MCF 10A (cell line): ENCODE measurements at regions of chrX and their contacts with region 1.

Region 1: DNA sequence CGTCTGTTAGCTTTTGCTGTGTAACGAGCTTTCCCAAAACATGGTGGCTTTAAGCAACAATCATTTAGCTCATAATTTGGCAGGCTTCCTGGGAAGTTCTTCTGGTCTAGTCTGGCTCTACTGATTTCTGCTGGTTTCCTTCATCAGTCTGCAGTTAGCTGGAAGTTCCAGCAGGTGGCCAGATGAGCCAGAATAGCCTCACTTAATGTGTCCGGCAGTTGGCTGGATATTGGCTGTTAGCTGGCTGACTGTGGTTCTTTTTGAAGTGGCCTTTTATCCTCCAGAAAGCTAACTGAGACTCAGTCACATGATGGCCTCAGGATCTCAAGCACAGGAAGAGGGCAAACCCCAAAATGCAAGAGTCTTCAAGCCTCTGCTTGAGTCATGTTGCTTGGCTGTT is 34.9 kb downstream of the FTHL17 start:
- DNase-seq: peak; percentile 67
- H3K4me3 Mint-ChIP-seq: no peak overlapping the region
- H3K27ac Mint-ChIP-seq: no peak overlapping the region
- H3K4me1 Mint-ChIP-seq: no peaks in the 10 kb centered on the region
- H3K27me3 Mint-ChIP-seq: peaks cover 11% of the 10 kb centered on the region
- CTCF ChIP-seq: peak; percentile 64

Region 2: DNA sequence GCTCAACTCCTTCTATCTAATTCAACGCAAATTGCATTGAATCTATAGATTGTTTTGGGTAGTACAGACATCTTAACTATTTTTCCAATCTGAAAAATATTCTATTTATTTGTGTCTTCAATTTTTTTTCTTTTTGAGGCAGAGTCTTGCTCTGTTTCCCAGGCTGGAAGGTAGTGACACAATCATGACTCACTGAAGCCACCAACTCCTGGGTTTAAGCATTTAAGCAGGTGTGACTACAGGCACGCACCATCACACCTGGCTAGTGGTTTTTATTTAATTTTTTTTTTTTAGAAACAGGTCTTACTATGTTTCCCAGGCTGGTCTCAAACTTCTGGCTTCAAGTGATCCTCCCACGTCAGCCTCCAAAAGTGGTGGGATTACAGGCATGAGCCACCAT is 285.4 kb before region 1 on chrX:
- CTCF ChIA-PET with region 1: no interaction called
- POLR2A ChIA-PET with region 1: no interaction called
- intact Hi-C with region 1: no loop called
- DNase-seq: peak; percentile 7
- H3K4me3 Mint-ChIP-seq: no peak overlapping the region
- H3K27ac Mint-ChIP-seq: no peak overlapping the region
- H3K4me1 Mint-ChIP-seq: no peaks in the 10 kb centered on the region
- H3K27me3 Mint-ChIP-seq: no peaks in the 10 kb centered on the region
- CTCF ChIP-seq: no peak

Region 3: GRCh38 chrX:30822068-30822681 is 214.7 kb before region 1 on chrX:
- CTCF ChIA-PET with region 1: no interaction called
- POLR2A ChIA-PET with region 1: no interaction called
- intact Hi-C with region 1: loop called (anchors 2 kb)
- DNase-seq: no peak
- H3K4me3 Mint-ChIP-seq: no peak overlapping the region
- H3K27ac Mint-ChIP-seq: no peak overlapping the region
- H3K4me1 Mint-ChIP-seq: no peaks in the 10 kb centered on the region
- H3K27me3 Mint-ChIP-seq: no peaks in the 10 kb centered on the region
- CTCF ChIP-seq: no peak

Region 4: DNA sequence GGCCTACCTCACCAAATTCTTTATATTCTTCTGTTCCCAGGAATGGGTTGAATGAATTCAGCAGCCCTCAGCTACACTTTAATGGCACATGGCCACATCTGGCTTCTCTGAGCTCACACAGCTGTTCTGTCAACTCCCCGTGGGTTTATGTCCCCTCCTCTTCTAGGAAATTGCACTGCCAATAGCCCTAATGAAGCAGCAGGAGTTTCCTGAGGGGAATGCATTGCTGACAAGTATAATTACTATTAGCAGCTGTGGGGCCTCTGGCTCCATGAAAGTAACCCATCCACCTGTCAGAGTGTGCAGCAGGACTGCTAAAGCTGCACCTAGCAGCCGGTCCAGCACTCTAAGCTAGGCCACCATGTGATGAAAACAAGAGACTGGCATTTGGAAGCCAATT is 15.4 kb before region 1 on chrX:
- CTCF ChIA-PET with region 1: interaction called, 30 read pairs
- POLR2A ChIA-PET with region 1: interaction called, 3 read pairs
- intact Hi-C with region 1: no loop called
- DNase-seq: no peak
- H3K4me3 Mint-ChIP-seq: no peak overlapping the region
- H3K27ac Mint-ChIP-seq: no peak overlapping the region
- H3K4me1 Mint-ChIP-seq: no peaks in the 10 kb centered on the region
- H3K27me3 Mint-ChIP-seq: peaks cover 13% of the 10 kb centered on the region
- CTCF ChIP-seq: no peak

Region 5: DNA sequence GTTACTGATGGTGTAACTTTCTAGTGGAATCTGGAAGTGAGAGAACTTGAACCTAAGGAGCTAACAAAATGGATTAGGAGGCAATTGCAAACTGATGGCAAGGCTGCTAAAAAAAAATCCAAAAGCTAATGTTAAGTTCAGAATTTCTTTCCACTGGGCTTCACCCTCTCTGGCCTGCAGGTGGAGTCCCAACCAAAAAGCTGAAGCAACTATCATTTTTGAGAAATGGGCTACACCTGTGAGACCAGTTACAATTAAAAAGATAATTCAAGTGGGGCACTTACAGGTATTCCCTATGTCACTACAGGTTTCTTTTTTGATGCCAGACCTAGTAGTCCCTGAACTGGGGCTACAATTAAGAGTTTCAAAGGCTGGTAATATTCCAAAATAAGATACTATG is 177.0 kb after region 1 on chrX:
- CTCF ChIA-PET with region 1: interaction called, 14 read pairs
- POLR2A ChIA-PET with region 1: no interaction called
- intact Hi-C with region 1: loop called (anchors 5 kb)
- DNase-seq: peak; percentile 52
- H3K4me3 Mint-ChIP-seq: no peak overlapping the region
- H3K27ac Mint-ChIP-seq: no peak overlapping the region
- H3K4me1 Mint-ChIP-seq: peaks cover 14% of the 10 kb centered on the region
- H3K27me3 Mint-ChIP-seq: peaks cover 20% of the 10 kb centered on the region
- CTCF ChIP-seq: peak; percentile 49

Region 6: GRCh38 chrX:31423609-31424189 is 386.8 kb after region 1 on chrX:
- CTCF ChIA-PET with region 1: interaction called, 5 read pairs
- POLR2A ChIA-PET with region 1: no interaction called
- intact Hi-C with region 1: loop called (anchors 10 kb)
- DNase-seq: peak; percentile 71
- H3K4me3 Mint-ChIP-seq: no peak overlapping the region
- H3K27ac Mint-ChIP-seq: no peak overlapping the region
- H3K4me1 Mint-ChIP-seq: peaks cover 8% of the 10 kb centered on the region
- H3K27me3 Mint-ChIP-seq: peaks cover 17% of the 10 kb centered on the region
- CTCF ChIP-seq: peak; percentile 31

Region 7: DNA sequence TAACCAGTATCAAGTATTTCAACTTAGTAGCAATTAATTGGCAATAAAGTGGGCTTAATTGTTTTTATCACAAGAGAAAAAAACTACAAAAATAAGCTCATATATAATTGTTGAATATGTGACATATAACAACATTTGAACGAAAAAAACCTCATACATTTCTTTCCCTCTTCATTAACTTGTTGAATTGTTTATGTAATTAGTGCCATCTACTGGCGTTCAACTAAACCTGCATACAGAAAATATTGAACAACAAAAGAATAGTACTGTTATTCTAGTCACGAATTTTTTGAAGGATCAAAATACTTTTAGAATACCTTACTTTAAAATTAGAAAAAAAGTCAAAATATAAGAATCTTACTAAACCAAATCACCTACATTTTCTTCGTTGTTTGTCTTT is 621.5 kb after region 1 on chrX:
- CTCF ChIA-PET with region 1: interaction called, 164 read pairs
- POLR2A ChIA-PET with region 1: interaction called, 5 read pairs
- intact Hi-C with region 1: loop called (anchors 1 kb)
- DNase-seq: peak; percentile 42
- H3K4me3 Mint-ChIP-seq: no peak overlapping the region
- H3K27ac Mint-ChIP-seq: no peak overlapping the region
- H3K4me1 Mint-ChIP-seq: no peaks in the 10 kb centered on the region
- H3K27me3 Mint-ChIP-seq: peaks cover 39% of the 10 kb centered on the region
- CTCF ChIP-seq: peak; percentile 42